AG04450 (cell line): ENCODE measurements at regions of chr15 and their contacts with region 1.

Region 1: DNA sequence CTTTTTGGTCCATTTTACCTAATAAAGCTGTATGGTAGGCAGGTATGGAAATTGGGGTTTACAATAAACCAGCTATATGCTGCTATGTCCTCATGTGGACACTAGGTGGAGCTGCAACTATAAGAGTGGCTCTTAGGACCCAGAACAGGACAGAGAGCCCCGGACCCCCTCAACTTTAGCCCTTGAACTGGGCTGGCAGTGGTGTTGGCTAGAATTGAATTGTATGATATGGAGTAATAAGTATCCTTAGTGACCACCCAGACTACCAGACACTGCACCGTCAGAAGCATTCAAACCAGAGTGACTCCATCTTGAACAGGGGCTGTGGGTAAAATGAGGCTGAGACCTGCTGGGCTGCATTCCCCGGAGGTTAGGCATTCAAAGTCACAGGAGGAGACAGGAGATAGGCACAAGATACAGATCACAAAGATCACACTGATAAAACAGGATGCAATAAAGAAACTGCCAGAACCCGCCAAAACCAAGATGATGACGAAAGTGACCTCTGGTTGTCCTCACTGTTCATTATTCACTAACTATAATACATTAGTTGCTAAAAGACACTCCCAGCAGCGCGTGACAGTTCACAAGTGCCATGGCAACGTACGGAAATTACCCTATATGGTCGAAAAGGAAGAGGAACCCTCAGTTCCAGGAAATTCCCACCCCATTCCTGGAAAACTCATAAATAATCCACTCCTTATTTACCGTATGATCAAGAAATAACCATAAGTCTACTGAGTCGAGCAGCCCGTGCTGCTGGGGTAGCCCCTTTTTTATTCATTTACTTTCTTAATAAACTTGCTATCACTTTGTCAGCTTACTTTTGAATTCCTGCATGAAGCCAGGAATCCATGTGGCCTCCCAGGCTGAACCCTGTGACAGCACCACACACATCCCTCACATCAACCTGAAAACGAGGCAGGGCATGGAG is 68.7 kb upstream of the BLM start:
- DNase-seq: peak; percentile 42
- H3K4me3 ChIP-seq: no peak overlapping the region
- H3K27ac ChIP-seq: peak overlapping the region; percentile 21
- H3K27me3 ChIP-seq: no peaks in the 10 kb centered on the region
- CTCF ChIP-seq: peak; percentile 88

Region 2: GRCh38 chr15:90694987-90695386 is 46.6 kb after region 1 on chr15:
- CTCF ChIA-PET with region 1: interaction called, 11 read pairs
- POLR2A ChIA-PET with region 1: no interaction called
- DNase-seq: no peak
- H3K4me3 ChIP-seq: no peak overlapping the region
- H3K27ac ChIP-seq: no peak overlapping the region
- H3K27me3 ChIP-seq: no peaks in the 10 kb centered on the region
- CTCF ChIP-seq: no peak